ENCODE measurements at regions of chr11 and their contacts with region 1.

Region 1: DNA sequence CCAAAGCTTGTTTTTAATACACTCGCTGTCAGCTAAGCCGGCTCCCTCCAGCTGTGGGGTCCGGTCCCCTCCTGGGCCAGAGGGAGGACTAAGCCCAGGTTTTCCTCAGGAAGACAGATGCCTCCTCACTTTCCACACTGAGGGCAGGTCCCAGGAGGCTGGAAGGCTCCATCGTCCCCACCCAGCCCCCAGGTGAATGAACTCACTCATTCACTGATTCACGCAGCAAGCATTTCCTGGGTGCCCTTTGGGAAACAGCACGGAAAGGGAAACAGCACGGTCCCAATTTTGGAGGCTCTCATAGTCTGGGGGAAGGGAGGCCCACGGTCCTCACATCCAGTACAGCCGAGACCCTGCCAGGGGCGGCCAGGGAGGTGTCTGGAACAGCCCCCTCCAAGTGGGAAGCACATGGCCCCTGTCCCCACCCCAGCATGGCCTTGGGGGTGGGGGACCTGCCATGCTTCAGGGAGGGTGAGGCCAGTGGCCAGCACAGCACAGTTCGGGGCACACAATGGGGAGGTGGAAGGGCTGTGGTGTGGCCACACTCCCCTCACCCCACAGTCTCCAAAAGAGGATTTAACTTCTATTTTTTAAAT is 9.3 kb upstream of the TH start:
- DNase-seq: no peak
- H3K4me3 ChIP-seq: no peak overlapping the region
- CTCF ChIP-seq: no peak
- POLR2A ChIP-seq: no peak

Region 2: GRCh38 chr11:2298795-2299761 is 118.2 kb after region 1 on chr11:
- intact Hi-C with region 1: loop called (anchors 5 kb)
- DNase-seq: peak; percentile 26 to 83
- H3K4me3 ChIP-seq: no peak overlapping the region
- CTCF ChIP-seq: no peak
- POLR2A ChIP-seq: no peak

Measured in lower leg skin (tissue), 4 donors.